ENCODE measurements at regions of chr2 and their contacts with region 1.

Region 1: GRCh38 chr2:165874445-165875039 is 79.0 kb downstream of the TTC21B start:
- DNase-seq: no peak
- ATAC-seq: peak; percentile 95
- H3K4me3 Mint-ChIP-seq: no peak overlapping the region
- H3K27ac Mint-ChIP-seq: no peak overlapping the region
- H3K4me1 Mint-ChIP-seq: peaks cover 7% of the 10 kb centered on the region
- H3K27me3 Mint-ChIP-seq: no peaks in the 10 kb centered on the region
- CTCF ChIP-seq: no peak

Region 2: GRCh38 chr2:165239230-165239629 is 635.3 kb before region 1 on chr2 and contains the start of gene SCN2A:
- CTCF ChIA-PET with region 1: interaction called, 4 read pairs
- POLR2A ChIA-PET with region 1: no interaction called
- intact Hi-C with region 1: loop called (anchors 1 kb)
- DNase-seq: no peak
- ATAC-seq: no peak
- H3K4me3 Mint-ChIP-seq: no peak within 1 kb of the TSS
- H3K27ac Mint-ChIP-seq: no peak within 1 kb of the TSS
- H3K4me1 Mint-ChIP-seq: no peaks in the 10 kb centered on the region
- H3K27me3 Mint-ChIP-seq: peaks cover 9% of the 10 kb centered on the region
- CTCF ChIP-seq: no peak
- total RNA-seq, gene SCN2A: 0.16 TPM in 1 of 2 replicates, not detected in the other

Region 3: GRCh38 chr2:165401285-165401852 is 473.2 kb before region 1 on chr2:
- CTCF ChIA-PET with region 1: interaction called, 49 read pairs
- POLR2A ChIA-PET with region 1: no interaction called
- intact Hi-C with region 1: loop called (anchors 1 kb)
- DNase-seq: no peak
- ATAC-seq: no peak
- H3K4me3 Mint-ChIP-seq: no peak overlapping the region
- H3K27ac Mint-ChIP-seq: no peak overlapping the region
- H3K4me1 Mint-ChIP-seq: no peaks in the 10 kb centered on the region
- H3K27me3 Mint-ChIP-seq: peaks cover 13% of the 10 kb centered on the region
- CTCF ChIP-seq: peak; percentile 45

Region 4: GRCh38 chr2:165698444-165698894 is 176.1 kb before region 1 on chr2:
- CTCF ChIA-PET with region 1: interaction called, 12 read pairs
- POLR2A ChIA-PET with region 1: no interaction called
- intact Hi-C with region 1: loop called (anchors 1 kb)
- DNase-seq: no peak
- ATAC-seq: peak; percentile 71
- H3K4me3 Mint-ChIP-seq: no peak overlapping the region
- H3K27ac Mint-ChIP-seq: no peak overlapping the region
- H3K4me1 Mint-ChIP-seq: peaks cover 4% of the 10 kb centered on the region
- H3K27me3 Mint-ChIP-seq: no peaks in the 10 kb centered on the region
- CTCF ChIP-seq: no peak

Region 5: GRCh38 chr2:165778653-165779451 is 95.7 kb before region 1 on chr2:
- CTCF ChIA-PET with region 1: interaction called, 11 read pairs
- POLR2A ChIA-PET with region 1: no interaction called
- intact Hi-C with region 1: no loop called
- DNase-seq: no peak
- ATAC-seq: no peak
- H3K4me3 Mint-ChIP-seq: no peak overlapping the region
- H3K27ac Mint-ChIP-seq: no peak overlapping the region
- H3K4me1 Mint-ChIP-seq: peaks cover 18% of the 10 kb centered on the region
- H3K27me3 Mint-ChIP-seq: no peaks in the 10 kb centered on the region
- CTCF ChIP-seq: no peak

Region 6: DNA sequence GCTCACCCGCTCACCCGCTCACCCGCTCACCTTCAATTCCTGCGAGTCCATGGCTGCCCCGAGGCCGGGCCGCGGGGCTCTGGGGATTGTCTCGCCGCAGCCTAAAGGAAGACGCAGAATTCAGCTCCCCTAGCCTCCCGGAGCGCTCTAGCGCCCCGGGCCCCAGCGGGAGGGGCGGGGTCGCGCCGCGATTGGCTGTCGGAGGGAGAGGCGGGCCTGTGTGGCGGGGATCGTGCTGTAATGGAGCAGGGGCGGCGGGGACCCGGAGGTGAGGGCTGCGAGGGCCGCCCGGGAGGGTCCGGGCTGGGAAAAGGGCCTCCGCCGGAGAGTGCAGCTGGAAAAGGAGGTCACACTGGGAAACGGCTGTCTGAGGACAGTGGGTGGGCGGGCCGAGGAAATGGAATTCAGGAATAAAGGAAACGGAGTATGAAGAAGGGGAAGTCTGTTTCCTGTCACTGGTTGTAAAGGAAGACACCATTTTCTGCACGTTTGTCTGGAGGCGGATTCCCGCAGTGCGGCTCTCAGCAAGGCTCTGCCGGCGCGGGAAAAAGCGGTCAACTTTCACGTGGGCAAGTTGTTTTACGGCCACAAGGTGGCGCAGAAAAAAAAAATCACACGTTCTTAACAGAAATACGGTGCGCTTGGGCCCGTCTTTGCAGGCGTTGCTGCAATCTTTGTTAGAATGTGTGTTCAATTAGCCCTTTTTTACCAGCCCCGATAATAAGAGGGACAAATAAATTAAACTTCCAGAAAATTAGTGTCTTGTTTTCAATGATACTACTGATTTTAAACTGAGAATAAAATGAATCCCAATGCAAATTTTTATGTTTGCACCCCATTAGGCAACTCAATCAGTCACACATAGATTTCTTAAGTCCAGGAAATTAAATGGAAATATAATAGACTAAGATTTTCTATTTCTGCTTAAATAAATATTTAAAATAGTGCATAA is 79.4 kb after region 1 on chr2 and contains the start of gene TTC21B:
- CTCF ChIA-PET with region 1: interaction called, 6 read pairs
- POLR2A ChIA-PET with region 1: no interaction called
- intact Hi-C with region 1: loop called (anchors 1 kb)
- DNase-seq: peak; percentile 92
- ATAC-seq: peak; percentile 96
- H3K4me3 Mint-ChIP-seq: no peak within 1 kb of the TSS
- H3K27ac Mint-ChIP-seq: peak within 1 kb of the TSS; percentile 56
- H3K4me1 Mint-ChIP-seq: peaks cover 11% of the 10 kb centered on the region
- H3K27me3 Mint-ChIP-seq: no peaks in the 10 kb centered on the region
- CTCF ChIP-seq: no peak
- total RNA-seq, gene TTC21B: 24.9 and 29.2 TPM in 2 replicates

Measured in activated B cell treated with CpG ODN at 0.5 μM for 24 hours (primary cell).